ENCODE measurements at regions of chr1 and their contacts with region 1.

Region 1: GRCh38 chr1:8560611-8561544 is 243.0 kb downstream of the SLC45A1 start:
- DNase-seq: no peak
- ATAC-seq: peak; percentile 78
- H3K4me3 ChIP-seq: no peak overlapping the region
- H3K27ac ChIP-seq: no peak overlapping the region; the same call in 1 of the 2 replicates
- H3K4me1 ChIP-seq: peaks cover 15% of the 10 kb centered on the region
- H3K27me3 ChIP-seq: no peaks in the 10 kb centered on the region
- CTCF ChIP-seq: peak; percentile 83 to 88 (median 87)
- EP300 ChIP-seq: no peak
- POLR2A ChIP-seq: no peak
- RAD21 ChIP-seq: peak; percentile 96

Region 2: DNA sequence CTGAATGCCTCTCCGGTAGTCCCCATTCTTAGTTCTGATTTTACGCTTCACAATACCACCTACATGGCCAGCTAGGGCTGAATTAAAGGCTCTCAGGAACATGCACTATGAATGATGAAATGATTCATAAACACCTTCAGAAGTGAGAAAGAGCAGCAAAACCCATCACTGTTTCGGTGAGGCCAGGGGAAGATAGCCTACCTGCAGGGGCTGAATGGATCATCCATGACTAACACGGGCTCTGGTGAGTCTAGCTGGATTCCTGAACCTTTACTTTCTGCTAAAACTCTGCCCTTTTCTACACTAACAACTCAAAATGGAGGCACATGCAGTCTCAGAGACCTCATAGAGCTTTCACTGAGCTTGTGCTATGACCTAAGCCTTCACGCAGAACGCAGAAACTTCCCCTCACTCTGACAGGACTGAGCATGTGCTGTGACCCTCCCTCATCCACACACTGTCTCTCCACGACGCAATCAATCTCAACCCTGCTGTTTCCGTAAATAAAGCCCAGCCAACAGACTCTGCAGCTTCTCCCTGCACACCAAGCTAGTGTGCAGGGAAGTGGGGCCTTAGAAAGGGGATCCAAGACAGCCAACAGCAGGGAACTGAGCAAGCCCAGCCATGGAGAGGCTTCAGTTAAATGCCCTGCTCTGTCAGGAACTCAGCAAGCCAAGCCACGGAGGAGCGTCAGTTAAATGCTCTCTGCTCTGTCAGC is 35.2 kb before region 1 on chr1:
- CTCF ChIA-PET with region 1: interaction called, 5 read pairs
- POLR2A ChIA-PET with region 1: interaction called, 4 read pairs
- RAD21 ChIA-PET with region 1: interaction called, 12 read pairs
- SMC1A ChIA-PET with region 1: interaction called, 6 read pairs
- in situ Hi-C with region 1: no loop called
- intact Hi-C with region 1: no loop called
- DNase-seq: peak; percentile 66
- ATAC-seq: peak; percentile 85
- H3K4me3 ChIP-seq: peak overlapping the region; percentile 67
- H3K27ac ChIP-seq: peak overlapping the region; percentile 67
- H3K4me1 ChIP-seq: peaks cover 23% of the 10 kb centered on the region
- H3K27me3 ChIP-seq: no peaks in the 10 kb centered on the region
- CTCF ChIP-seq: no peak
- EP300 ChIP-seq: no peak
- POLR2A ChIP-seq: no peak; the same call in 1 of the 2 replicates
- RAD21 ChIP-seq: no peak

Region 3: GRCh38 chr1:8580566-8580965 is 19.7 kb after region 1 on chr1:
- CTCF ChIA-PET with region 1: interaction called, 18 read pairs
- POLR2A ChIA-PET with region 1: interaction called, 5 read pairs
- RAD21 ChIA-PET with region 1: interaction called, 12 read pairs
- SMC1A ChIA-PET with region 1: interaction called, 15 read pairs
- in situ Hi-C with region 1: no loop called
- intact Hi-C with region 1: no loop called
- DNase-seq: no peak
- ATAC-seq: no peak
- H3K4me3 ChIP-seq: no peak overlapping the region
- H3K27ac ChIP-seq: no peak overlapping the region
- H3K4me1 ChIP-seq: no peaks in the 10 kb centered on the region
- H3K27me3 ChIP-seq: no peaks in the 10 kb centered on the region
- CTCF ChIP-seq: no peak
- EP300 ChIP-seq: no peak
- POLR2A ChIP-seq: no peak
- RAD21 ChIP-seq: no peak

Region 4: DNA sequence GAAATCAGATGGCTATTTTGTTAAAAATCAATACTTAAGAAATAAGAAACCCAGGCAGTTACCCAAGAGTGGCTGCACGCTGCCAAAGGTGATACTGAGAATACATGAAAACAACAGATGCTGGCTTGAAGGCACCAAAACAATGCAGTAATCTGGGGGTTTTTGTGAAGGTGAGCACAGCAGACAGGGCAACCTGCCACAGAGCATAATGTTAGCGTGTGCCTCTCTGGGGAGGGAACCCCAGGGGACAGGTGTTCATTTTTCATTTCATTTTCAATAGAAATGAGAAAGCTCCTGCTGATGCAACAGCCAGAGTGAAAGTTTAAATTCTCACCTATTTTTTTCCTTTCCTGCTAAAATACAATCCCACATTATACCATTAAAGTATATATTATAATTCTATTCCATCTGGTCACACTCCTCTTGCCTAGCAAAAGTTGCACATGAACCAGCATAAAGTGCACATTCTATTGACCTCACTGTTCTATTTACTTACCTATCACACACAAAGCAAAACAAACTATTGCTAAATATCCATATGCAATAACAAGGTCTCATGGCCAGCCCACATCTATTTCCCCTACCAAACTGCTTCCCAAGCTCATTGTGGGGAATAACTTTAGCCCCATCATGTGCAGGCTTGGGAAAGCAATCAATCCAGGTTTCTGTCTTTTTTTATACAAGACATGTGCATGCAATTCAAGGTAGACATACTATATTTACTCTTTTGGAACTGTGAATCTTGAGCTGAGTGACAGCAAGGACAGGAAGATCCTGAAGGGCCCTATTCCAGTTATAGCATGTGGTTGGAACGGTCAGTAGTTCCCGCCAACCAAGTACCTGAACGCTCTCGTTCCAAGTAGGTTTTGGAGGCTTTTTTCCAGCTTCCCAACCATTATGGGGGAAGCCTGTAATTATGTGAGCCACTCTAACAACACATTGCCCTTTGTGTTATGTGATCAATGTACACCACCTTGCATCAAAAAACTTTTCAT is 83.0 kb after region 1 on chr1:
- CTCF ChIA-PET with region 1: interaction called, 15 read pairs
- POLR2A ChIA-PET with region 1: interaction called, 3 read pairs
- RAD21 ChIA-PET with region 1: interaction called, 14 read pairs
- SMC1A ChIA-PET with region 1: interaction called, 25 read pairs
- in situ Hi-C with region 1: no loop called
- intact Hi-C with region 1: no loop called
- DNase-seq: peak; percentile 94
- ATAC-seq: peak; percentile 95
- H3K4me3 ChIP-seq: no peak overlapping the region
- H3K27ac ChIP-seq: peak overlapping the region; percentile 75
- H3K4me1 ChIP-seq: peaks cover 43% of the 10 kb centered on the region
- H3K27me3 ChIP-seq: no peaks in the 10 kb centered on the region
- CTCF ChIP-seq: no peak
- EP300 ChIP-seq: peak; percentile 52 to 61; a peak in 1 of 4 replicates
- POLR2A ChIP-seq: no peak
- RAD21 ChIP-seq: 0 out of 2 replicates have a peak, but pooled peaks have one; percentile 27

Region 5: GRCh38 chr1:8671306-8671917 is 110.5 kb after region 1 on chr1:
- CTCF ChIA-PET with region 1: interaction called, 181 read pairs
- POLR2A ChIA-PET with region 1: interaction called, 7 read pairs
- RAD21 ChIA-PET with region 1: interaction called, 174 read pairs
- SMC1A ChIA-PET with region 1: interaction called, 258 read pairs
- in situ Hi-C with region 1: loop called (anchors 5 kb)
- intact Hi-C with region 1: loop called (anchors 1 kb)
- DNase-seq: no peak
- ATAC-seq: 0 out of 3 replicates have a peak, but pooled peaks have one; percentile 24
- H3K4me3 ChIP-seq: no peak overlapping the region
- H3K27ac ChIP-seq: no peak overlapping the region
- H3K4me1 ChIP-seq: peaks cover 31% of the 10 kb centered on the region
- H3K27me3 ChIP-seq: no peaks in the 10 kb centered on the region
- CTCF ChIP-seq: peak; percentile 76 to 80 (median 79)
- EP300 ChIP-seq: no peak
- POLR2A ChIP-seq: no peak
- RAD21 ChIP-seq: peak; percentile 94

Region 6: GRCh38 chr1:8702850-8703810 is 142.3 kb after region 1 on chr1:
- CTCF ChIA-PET with region 1: interaction called, 25 read pairs
- POLR2A ChIA-PET with region 1: interaction called, 4 read pairs
- RAD21 ChIA-PET with region 1: interaction called, 9 read pairs
- SMC1A ChIA-PET with region 1: interaction called, 17 read pairs
- in situ Hi-C with region 1: no loop called
- intact Hi-C with region 1: no loop called
- DNase-seq: no peak
- ATAC-seq: peak; percentile 75
- H3K4me3 ChIP-seq: peak overlapping the region; percentile 57
- H3K27ac ChIP-seq: peak overlapping the region; percentile 54
- H3K4me1 ChIP-seq: no peaks in the 10 kb centered on the region; the same call in 1 of the 2 replicates
- H3K27me3 ChIP-seq: no peaks in the 10 kb centered on the region
- CTCF ChIP-seq: peak; percentile 6 to 55 (median 17); a peak in 3 of 6 replicates
- EP300 ChIP-seq: no peak
- POLR2A ChIP-seq: peak; percentile 87
- RAD21 ChIP-seq: peak; percentile 29; the same call in 1 of the 2 replicates

Region 7: GRCh38 chr1:8727809-8728213 is 166.9 kb after region 1 on chr1:
- CTCF ChIA-PET with region 1: interaction called, 211 read pairs
- POLR2A ChIA-PET with region 1: interaction called, 4 read pairs
- RAD21 ChIA-PET with region 1: interaction called, 107 read pairs
- SMC1A ChIA-PET with region 1: interaction called, 106 read pairs
- in situ Hi-C with region 1: loop called (anchors 5 kb)
- intact Hi-C with region 1: loop called (anchors 1 kb)
- DNase-seq: no peak
- ATAC-seq: peak; percentile 73
- H3K4me3 ChIP-seq: no peak overlapping the region
- H3K27ac ChIP-seq: no peak overlapping the region
- H3K4me1 ChIP-seq: peaks cover 25% of the 10 kb centered on the region
- H3K27me3 ChIP-seq: no peaks in the 10 kb centered on the region
- CTCF ChIP-seq: no peak
- EP300 ChIP-seq: no peak
- POLR2A ChIP-seq: no peak
- RAD21 ChIP-seq: no peak

Measured in GM12878 (cell line).